Activated CD4-positive, alpha-beta T cell treated with anti-CD3 and anti-CD28 coated beads for 36 hours (primary cell): ENCODE measurements at regions of chr5 and their contacts with region 1.

Region 1: GRCh38 chr5:133944263-133945185 is 23.9 kb downstream of the C5orf15 start:
- DNase-seq: peak; percentile 78
- ATAC-seq: peak; percentile 81
- H3K4me3 Mint-ChIP-seq: no peak overlapping the region
- H3K27ac Mint-ChIP-seq: no peak overlapping the region
- H3K4me1 Mint-ChIP-seq: peaks cover 3% of the 10 kb centered on the region
- H3K27me3 Mint-ChIP-seq: no peaks in the 10 kb centered on the region

Region 2: DNA sequence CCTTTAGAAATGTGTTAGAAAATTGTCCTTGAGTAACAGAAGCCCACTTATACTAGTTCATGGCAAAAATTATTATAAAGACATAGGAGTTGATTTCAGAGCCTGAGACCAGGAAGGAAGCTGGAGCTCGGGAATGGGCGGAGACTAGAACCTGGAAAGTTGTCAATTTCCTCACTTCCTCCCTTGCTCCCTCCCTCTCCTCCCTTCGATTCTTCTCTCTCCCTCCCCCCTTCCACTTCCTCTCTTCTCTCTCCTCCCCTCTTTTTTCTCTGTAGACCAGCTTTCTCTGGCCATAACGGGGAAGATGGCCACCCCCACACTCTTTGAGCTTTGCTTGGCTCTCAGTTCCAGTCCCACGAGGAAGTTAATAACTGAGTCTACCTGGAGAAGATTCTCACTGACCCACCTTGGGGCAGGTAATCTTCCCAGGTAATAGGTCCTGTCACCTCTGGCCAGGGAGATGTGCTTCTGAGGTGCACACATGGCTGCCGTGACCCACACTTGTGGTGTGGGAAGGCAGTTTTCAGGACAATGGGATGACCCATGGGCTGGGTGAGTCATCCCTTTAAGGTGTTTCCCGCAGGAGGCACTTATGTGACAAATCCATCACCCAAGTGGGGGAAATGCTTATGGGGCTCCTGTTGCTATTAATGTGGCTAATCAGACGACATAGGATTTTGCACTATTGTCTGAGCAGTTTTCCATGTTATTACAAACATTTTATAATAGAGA is 814.0 kb before region 1 on chr5:
- CTCF ChIA-PET with region 1: no interaction called
- POLR2A ChIA-PET with region 1: no interaction called
- intact Hi-C with region 1: no loop called
- DNase-seq: no peak
- ATAC-seq: no peak
- H3K4me3 Mint-ChIP-seq: no peak overlapping the region
- H3K27ac Mint-ChIP-seq: no peak overlapping the region
- H3K4me1 Mint-ChIP-seq: no peaks in the 10 kb centered on the region
- H3K27me3 Mint-ChIP-seq: no peaks in the 10 kb centered on the region

Region 3: DNA sequence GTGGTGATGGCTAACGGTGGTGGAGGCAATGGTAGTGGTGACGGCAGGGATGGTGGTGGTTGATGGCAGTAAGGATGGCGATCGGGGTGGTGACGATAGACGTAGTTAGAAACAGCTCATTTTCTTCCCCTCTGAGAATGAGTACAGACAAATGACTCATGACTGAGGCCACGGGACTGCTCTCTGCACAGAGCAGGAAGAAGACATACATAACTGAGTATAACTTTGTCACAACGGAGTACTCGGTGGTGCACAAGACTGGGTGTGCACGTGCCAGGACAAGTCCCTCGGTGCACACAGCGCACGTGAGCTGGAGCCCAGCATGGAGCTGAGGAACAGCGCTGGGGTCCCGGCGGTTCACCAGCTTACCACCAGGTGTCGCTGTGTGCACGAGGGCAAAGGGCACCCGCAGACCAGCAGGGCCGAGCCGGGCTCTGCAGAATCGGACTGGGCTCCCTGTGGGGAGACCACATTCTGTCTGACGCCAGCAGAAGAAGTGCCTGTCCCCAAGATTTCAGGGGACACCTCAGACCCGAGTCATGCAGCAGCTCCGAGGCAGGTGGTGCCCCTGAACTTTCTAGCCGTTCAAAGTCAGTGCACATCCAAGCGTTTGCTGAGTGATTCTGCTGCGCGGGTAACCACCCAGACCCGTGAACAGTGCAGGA is 520.8 kb before region 1 on chr5:
- CTCF ChIA-PET with region 1: interaction called, 4 read pairs
- POLR2A ChIA-PET with region 1: no interaction called
- intact Hi-C with region 1: loop called (anchors 2 to 10 kb)
- DNase-seq: peak; percentile 87
- ATAC-seq: peak; percentile 96
- H3K4me3 Mint-ChIP-seq: no peak overlapping the region
- H3K27ac Mint-ChIP-seq: peak overlapping the region; percentile 26
- H3K4me1 Mint-ChIP-seq: peaks cover 9% of the 10 kb centered on the region
- H3K27me3 Mint-ChIP-seq: peaks cover 13% of the 10 kb centered on the region

Region 4: GRCh38 chr5:133489632-133490031 is 454.9 kb before region 1 on chr5:
- CTCF ChIA-PET with region 1: interaction called, 3 read pairs
- POLR2A ChIA-PET with region 1: no interaction called
- intact Hi-C with region 1: loop called in 1 of 2 experiments (anchors 1 kb)
- DNase-seq: peak; percentile 56
- ATAC-seq: peak; percentile 99
- H3K4me3 Mint-ChIP-seq: no peak overlapping the region
- H3K27ac Mint-ChIP-seq: peak overlapping the region; percentile 17
- H3K4me1 Mint-ChIP-seq: peaks cover 8% of the 10 kb centered on the region
- H3K27me3 Mint-ChIP-seq: peaks cover 3% of the 10 kb centered on the region

Region 5: DNA sequence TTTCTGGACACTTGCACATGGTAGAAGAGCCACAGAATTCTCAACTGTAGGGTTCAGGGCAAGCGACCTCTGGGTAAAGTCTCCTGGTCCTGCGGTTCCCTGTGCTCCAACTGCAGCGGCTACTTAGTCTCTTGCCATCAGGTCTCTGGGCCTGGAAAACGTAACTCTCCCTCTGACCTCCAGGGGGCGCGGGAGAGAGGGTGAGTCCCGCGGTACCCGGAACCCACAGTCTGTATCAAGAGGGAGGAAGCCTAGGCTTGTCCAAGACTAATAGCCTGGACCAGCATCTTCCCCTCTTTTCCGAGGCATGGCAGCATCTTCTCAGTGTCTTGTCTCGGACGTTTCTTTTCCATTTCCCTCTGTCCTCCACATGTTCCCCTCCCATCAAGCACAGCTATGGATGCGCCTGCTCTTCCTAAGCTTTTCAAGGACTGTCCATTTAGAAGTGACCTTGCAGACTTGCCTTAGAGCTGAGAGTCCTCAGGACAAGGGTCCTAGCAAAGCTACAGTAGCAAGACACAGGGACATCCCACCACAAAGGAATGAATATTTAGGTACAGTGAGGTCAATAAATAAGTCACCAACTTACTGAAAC is 391.5 kb before region 1 on chr5:
- CTCF ChIA-PET with region 1: interaction called, 4 read pairs
- POLR2A ChIA-PET with region 1: no interaction called
- intact Hi-C with region 1: loop called (anchors 1 kb)
- DNase-seq: peak; percentile 78
- ATAC-seq: peak; percentile 80
- H3K4me3 Mint-ChIP-seq: no peak overlapping the region
- H3K27ac Mint-ChIP-seq: no peak overlapping the region
- H3K4me1 Mint-ChIP-seq: no peaks in the 10 kb centered on the region
- H3K27me3 Mint-ChIP-seq: peaks cover 24% of the 10 kb centered on the region

Region 6: DNA sequence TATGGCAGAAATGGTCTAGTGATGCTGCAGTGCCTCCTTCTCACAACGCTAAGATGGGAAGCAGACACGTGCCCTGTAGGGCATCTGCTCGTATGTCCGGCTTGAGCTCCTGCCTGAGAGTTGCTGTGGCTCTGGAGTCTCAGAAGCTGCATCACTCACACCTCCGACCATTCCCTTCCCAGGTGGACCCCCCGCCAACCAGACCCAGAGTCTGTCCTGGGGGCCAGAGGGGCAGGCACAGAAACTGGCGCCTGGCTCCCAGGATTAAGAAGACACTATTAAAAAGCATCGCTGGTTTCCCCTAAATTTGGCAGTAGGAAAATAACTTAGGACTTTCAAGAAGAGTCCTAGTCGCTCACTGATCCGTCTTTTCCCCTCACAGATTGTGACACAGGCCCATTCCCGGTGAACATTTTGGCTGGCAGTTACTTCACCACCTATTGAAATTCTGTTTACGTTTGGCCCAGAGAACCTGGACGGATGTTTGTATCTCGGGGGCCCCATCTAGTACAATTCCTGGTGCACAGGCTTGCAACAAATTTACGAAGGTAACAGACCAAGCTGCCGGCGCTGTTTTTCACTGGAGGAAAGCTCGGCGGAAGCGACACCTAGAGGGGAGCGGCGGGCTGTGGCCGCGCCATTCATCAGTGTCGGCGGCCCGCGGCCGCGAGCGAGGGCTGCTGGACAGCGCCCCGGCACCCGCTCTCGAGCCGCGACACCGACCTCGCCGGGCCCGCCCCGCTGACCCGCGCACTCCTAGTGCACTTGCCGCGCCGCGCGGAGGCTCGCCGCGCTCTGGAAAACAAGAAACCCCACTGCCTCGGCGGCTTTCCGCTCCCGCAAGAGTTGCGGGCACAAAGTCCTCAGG is 333.8 kb before region 1 on chr5:
- CTCF ChIA-PET with region 1: no interaction called
- POLR2A ChIA-PET with region 1: no interaction called
- intact Hi-C with region 1: loop called in 1 of 2 experiments (anchors 10 kb)
- DNase-seq: peak; percentile 72
- ATAC-seq: peak; percentile 79
- H3K4me3 Mint-ChIP-seq: peak overlapping the region; percentile 49
- H3K27ac Mint-ChIP-seq: no peak overlapping the region
- H3K4me1 Mint-ChIP-seq: peaks cover 9% of the 10 kb centered on the region
- H3K27me3 Mint-ChIP-seq: peaks cover 58% of the 10 kb centered on the region

Region 7: DNA sequence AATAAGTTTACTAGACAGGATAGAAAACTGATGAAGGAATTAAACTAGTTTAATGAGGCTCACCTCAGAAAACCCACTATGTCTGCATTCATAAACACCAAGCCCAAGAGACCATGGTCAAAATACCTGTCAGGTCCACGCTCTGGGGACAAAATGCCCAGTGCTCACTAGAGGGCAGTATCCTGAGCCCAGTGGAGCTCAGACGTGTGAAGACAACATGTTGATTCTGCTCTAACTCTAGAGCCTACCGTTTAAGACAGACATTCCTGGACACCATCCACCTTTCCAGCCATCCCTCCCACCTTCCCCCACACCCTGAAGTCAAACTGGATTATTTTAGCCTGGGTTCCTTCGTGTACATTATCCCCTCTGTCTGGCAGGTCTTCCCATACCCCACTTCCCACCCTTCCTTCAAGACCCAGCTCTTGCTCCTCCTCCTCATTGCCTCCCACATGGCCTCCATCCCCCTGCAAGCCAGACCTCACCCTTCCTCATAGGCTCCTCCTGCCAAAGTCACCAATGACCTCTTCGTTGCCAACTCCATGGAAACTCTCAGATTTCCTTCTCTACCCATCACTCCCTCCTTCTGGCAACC is 189.9 kb before region 1 on chr5:
- CTCF ChIA-PET with region 1: interaction called, 6 read pairs
- POLR2A ChIA-PET with region 1: no interaction called
- intact Hi-C with region 1: loop called (anchors 1 to 10 kb)
- DNase-seq: peak; percentile 56
- ATAC-seq: peak; percentile 54
- H3K4me3 Mint-ChIP-seq: no peak overlapping the region
- H3K27ac Mint-ChIP-seq: no peak overlapping the region
- H3K4me1 Mint-ChIP-seq: no peaks in the 10 kb centered on the region
- H3K27me3 Mint-ChIP-seq: peaks cover 19% of the 10 kb centered on the region

Region 8: DNA sequence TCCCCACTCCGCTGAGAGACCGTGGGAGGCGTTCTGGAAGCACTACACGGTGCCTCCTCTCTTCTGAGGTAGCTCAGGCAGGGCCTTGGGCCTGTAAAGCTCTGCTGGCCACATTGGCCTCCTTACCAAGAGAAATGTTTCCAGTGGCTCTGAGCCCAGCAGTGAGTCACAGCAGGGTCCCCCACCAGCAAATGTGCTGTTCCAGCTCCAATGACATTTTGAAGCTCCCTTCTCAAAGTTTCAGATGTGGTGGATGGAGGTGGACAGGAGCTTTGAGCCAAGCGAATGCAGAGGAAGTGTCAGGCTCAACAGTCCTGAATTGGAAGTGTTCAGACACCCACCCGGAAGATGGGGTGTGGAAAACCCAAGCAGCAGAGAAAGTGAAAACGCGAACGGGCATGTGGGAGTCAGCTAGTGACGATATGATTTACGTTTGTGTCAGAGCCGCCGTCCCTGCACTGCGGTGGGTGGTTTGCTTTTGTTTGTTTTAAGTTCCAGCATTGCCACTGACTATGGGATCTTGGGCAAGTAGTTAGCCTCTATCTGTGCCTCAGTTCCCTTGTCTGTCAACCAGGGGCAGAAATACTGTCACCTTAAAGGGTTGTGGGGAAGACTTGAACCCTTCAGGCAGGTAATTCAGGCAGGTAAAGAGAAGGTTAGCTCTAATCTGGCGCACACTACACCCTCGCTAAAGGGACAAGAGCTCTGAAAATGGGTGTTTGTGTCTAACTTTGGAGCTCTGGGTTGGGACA is 14.3 kb before region 1 on chr5:
- CTCF ChIA-PET with region 1: interaction called, 10 read pairs
- POLR2A ChIA-PET with region 1: no interaction called
- intact Hi-C with region 1: no loop called
- DNase-seq: peak; percentile 89
- ATAC-seq: peak; percentile 84
- H3K4me3 Mint-ChIP-seq: peak overlapping the region; percentile 74
- H3K27ac Mint-ChIP-seq: peak overlapping the region; percentile 99
- H3K4me1 Mint-ChIP-seq: peaks cover 61% of the 10 kb centered on the region
- H3K27me3 Mint-ChIP-seq: no peaks in the 10 kb centered on the region